ENCODE measurements at regions of chr1 and their contacts with region 1.

Region 1: DNA sequence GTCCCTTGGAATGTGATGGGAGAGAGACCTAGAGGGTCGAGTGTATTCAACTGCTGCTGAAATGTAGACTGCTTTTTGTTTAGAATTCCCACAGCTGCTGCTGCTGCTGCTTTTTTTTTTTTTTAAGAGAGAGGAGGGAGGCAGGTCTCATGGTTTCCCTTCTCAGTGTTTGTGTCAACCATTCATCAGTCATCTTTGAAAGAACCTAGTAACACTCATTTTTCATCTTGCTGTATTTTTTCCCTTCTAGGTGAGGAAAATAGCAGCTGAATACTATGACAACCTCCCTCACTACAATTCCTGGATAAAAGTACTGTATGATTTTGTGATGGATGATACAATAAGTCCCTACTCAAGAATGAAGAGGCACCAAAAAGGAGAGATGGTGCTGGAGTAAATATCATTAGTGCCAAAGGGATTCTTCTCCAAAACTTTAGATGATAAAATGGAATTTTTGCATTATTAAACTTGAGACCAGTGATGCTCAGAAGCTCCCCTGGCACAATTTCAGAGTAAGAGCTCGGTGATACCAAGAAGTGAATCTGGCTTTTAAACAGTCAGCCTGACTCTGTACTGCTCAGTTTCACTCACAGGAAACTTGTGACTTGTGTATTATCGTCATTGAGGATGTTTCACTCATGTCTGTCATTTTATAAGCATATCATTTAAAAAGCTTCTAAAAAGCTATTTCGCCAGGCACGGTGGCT is 9.2 kb downstream of the DEGS1 start:
- DNase-seq: peak; percentile 39
- H3K4me3 Mint-ChIP-seq: no peak overlapping the region
- H3K27ac Mint-ChIP-seq: peak overlapping the region; percentile 92
- H3K4me1 Mint-ChIP-seq: peaks cover 37% of the 10 kb centered on the region
- H3K27me3 Mint-ChIP-seq: no peaks in the 10 kb centered on the region

Region 2: DNA sequence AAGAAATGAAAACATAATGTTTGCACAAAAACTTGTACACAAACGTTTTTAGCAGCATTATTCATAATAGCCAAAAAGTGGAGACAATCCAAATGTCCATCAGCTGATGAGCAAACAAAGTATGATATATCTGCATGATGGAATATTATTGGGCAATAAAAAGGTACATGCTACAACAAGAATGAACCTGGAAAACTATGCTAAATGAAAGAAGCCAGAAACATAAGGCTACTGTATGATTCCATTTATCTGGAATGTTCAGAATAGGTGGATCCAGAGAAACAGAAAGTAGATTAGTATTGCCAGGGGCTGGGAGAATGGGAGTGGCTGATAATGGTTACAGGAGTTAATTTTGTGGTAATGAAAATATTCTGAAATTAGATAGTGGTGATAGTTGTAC is 59.3 kb before region 1 on chr1:
- CTCF ChIA-PET with region 1: no interaction called
- POLR2A ChIA-PET with region 1: no interaction called
- intact Hi-C with region 1: no loop called
- DNase-seq: no peak
- H3K4me3 Mint-ChIP-seq: no peak overlapping the region
- H3K27ac Mint-ChIP-seq: no peak overlapping the region
- H3K4me1 Mint-ChIP-seq: no peaks in the 10 kb centered on the region
- H3K27me3 Mint-ChIP-seq: no peaks in the 10 kb centered on the region

Region 3: GRCh38 chr1:224149713-224150112 is 42.5 kb before region 1 on chr1:
- CTCF ChIA-PET with region 1: no interaction called
- POLR2A ChIA-PET with region 1: no interaction called
- intact Hi-C with region 1: no loop called
- DNase-seq: no peak
- H3K4me3 Mint-ChIP-seq: no peak overlapping the region
- H3K27ac Mint-ChIP-seq: no peak overlapping the region
- H3K4me1 Mint-ChIP-seq: peaks cover 6% of the 10 kb centered on the region
- H3K27me3 Mint-ChIP-seq: no peaks in the 10 kb centered on the region

Region 4: GRCh38 chr1:224168859-224169380 is 23.3 kb before region 1 on chr1:
- CTCF ChIA-PET with region 1: interaction called, 9 read pairs
- POLR2A ChIA-PET with region 1: interaction called, 15 read pairs
- intact Hi-C with region 1: loop called (anchors 1 kb)
- DNase-seq: peak; percentile 22
- H3K4me3 Mint-ChIP-seq: peak overlapping the region; percentile 17
- H3K27ac Mint-ChIP-seq: peak overlapping the region; percentile 50
- H3K4me1 Mint-ChIP-seq: peaks cover 30% of the 10 kb centered on the region
- H3K27me3 Mint-ChIP-seq: no peaks in the 10 kb centered on the region

Region 5: DNA sequence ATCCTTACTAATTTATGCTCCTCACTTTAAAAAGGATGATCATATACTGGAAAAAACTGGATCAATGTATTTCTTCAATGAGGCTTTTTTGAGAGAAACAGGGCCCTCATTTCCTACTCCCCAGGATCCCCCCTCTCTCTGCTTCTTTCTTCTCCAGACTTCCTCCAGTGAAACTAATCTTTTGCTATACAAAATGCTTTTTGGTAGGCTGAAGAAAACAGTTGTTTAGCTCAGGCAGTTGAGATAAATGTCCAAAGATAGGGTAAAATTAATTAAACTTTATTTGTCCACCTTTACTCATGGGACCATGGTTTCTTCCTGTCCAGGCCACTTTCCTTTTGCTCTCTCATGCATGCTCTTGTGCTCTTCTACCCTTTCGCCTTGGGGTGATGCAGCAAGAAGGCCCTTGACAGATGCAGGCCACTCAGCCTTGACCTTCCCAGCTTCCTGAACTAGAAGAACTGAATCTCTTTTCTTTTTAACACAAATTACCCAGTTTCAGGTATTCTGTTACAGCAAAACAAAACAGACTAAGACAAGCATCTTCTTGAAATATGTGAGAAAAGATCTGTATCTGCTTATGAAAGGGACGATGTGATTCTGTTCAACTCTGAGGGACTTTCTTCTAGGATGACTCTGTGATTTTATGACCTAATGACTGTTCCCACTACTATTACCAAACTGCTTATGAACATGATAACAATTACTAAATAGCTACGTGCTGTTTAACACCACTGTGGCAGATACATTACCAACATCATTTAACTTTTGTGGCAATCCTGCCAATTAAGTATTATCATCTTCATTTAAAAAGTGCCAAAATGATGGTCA is 74.1 kb after region 1 on chr1:
- CTCF ChIA-PET with region 1: no interaction called
- POLR2A ChIA-PET with region 1: interaction called, 3 read pairs
- intact Hi-C with region 1: loop called (anchors 5 kb)
- DNase-seq: no peak
- H3K4me3 Mint-ChIP-seq: no peak overlapping the region
- H3K27ac Mint-ChIP-seq: no peak overlapping the region
- H3K4me1 Mint-ChIP-seq: peaks cover 17% of the 10 kb centered on the region
- H3K27me3 Mint-ChIP-seq: no peaks in the 10 kb centered on the region